Naive thymus-derived CD4-positive, alpha-beta T cell (primary cell): ENCODE measurements at regions of chr15 and their contacts with region 1.

Region 1: GRCh38 chr15:99424978-99425656 is 140.7 kb upstream of the MEF2A start:
- DNase-seq: peak in 7 of 9 donors; percentile 33 to 63 (median 39)
- ATAC-seq: peak; percentile 79
- H3K4me3 ChIP-seq: peak overlapping the region; percentile 0
- H3K4me3 Mint-ChIP-seq: peak overlapping the region; percentile 65 to 91 (median 82)
- H3K27ac ChIP-seq: peak overlapping the region; percentile 72
- H3K27ac Mint-ChIP-seq: peak overlapping the region; percentile 89 to 98 (median 97)
- H3K4me1 ChIP-seq: peaks cover 0 to 60% of the 10 kb centered on the region in 2 donors
- H3K4me1 Mint-ChIP-seq: peaks cover 22 to 82% (median 75%) of the 10 kb centered on the region in 7 donors
- H3K27me3 ChIP-seq: no peaks in the 10 kb centered on the region
- H3K27me3 Mint-ChIP-seq: no peaks in the 10 kb centered on the region

Region 2: DNA sequence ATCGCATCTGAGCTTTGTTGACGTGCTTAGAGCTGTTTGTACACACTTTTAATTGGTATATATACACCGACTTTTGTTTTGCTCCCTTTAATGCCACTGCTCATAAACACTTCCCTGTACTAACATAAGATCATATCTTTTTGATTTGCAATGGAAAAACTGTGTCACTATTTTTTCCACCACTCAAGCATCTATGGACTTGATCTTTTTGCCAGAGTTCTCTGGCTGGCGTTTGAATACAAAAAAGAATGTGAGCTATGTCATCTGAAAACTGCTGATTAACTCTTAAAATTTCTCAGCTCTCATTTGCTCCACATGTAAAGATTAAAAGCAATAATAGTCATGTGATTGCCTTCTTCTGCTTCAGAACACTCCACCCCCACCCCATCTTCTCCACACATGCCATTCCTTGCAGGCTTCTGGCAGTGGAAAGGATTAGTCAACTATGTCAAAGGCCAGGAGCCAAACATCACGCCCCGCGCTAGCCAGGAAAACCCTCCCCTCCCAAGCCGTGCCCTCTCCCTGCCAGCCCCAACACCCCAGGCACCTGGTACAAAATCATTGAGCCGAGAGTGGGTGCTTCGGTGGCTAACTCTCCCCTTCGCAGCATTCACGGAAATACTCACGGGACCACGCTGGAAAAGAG is 17.3 kb after region 1 on chr15:
- CTCF ChIA-PET with region 1: interaction called, 7 read pairs
- POLR2A ChIA-PET with region 1: interaction called, 71 read pairs
- intact Hi-C with region 1: loop called in 1 of 2 experiments (anchors 1 kb)
- DNase-seq: peak in 3 of 9 donors; percentile 22 to 44 (median 23)
- ATAC-seq: no peak
- H3K4me3 ChIP-seq: no peak overlapping the region
- H3K4me3 Mint-ChIP-seq: peak overlapping the region in 6 of 10 donors; percentile 8 to 30 (median 20)
- H3K27ac ChIP-seq: no peak overlapping the region
- H3K27ac Mint-ChIP-seq: peak overlapping the region; percentile 30 to 100 (median 90)
- H3K4me1 ChIP-seq: peaks cover 0 to 57% of the 10 kb centered on the region in 2 donors
- H3K4me1 Mint-ChIP-seq: peaks cover 10 to 87% (median 65%) of the 10 kb centered on the region in 7 donors
- H3K27me3 ChIP-seq: no peaks in the 10 kb centered on the region
- H3K27me3 Mint-ChIP-seq: peaks cover 0 to 8% (median 0%) of the 10 kb centered on the region in 5 donors

Region 3: DNA sequence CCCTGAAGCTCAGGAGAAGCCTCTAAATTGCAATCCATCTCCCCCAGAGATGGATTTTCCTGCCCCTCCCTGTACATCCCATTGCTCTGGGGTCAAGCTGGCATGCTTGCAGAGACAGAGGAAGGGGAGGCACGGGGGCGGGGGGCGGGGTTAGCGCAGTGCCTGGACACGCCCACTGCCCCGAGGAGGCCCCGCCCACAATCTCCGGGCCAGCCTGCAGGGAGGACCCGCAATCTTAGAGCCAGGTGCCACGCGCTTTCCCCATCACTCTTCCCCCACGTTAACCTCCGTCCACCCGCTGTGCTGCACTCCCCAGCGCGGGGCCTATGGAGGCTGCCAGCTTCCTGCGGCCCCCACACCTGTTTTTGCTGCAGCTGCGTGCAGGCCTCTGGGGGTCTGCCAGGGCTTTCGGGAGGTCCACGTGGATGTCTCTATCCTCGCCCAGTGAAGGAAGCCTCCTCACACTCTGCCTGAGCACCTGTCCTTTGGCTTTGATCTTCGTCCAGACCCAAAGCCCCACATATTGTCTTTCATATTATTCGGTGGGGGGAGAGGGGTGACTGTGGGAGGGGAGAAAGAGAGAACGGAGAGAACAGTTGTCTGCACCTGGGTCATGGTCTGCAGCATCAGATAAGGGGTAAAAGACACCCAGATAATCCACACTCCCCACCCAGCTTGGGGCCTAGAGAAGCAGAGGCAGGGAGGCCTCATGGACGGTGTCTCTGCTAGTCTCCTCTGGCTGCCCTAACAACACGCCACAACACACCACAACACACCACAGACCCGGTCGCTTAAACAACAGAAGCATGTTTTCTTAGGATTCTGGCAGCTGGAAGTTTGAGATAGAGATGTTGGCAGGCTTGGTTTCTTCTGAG is 22.6 kb after region 1 on chr15:
- CTCF ChIA-PET with region 1: interaction called, 5 read pairs
- POLR2A ChIA-PET with region 1: interaction called, 71 read pairs
- intact Hi-C with region 1: loop called in 1 of 2 experiments (anchors 1 kb)
- DNase-seq: peak in 1 of 9 donors; percentile 21
- ATAC-seq: no peak
- H3K4me3 ChIP-seq: no peak overlapping the region
- H3K4me3 Mint-ChIP-seq: peak overlapping the region in 8 of 10 donors; percentile 15 to 53 (median 50)
- H3K27ac ChIP-seq: no peak overlapping the region
- H3K27ac Mint-ChIP-seq: peak overlapping the region in 8 of 9 donors; percentile 19 to 91 (median 56)
- H3K4me1 ChIP-seq: peaks cover 0 to 53% of the 10 kb centered on the region in 2 donors
- H3K4me1 Mint-ChIP-seq: peaks cover 33 to 89% (median 68%) of the 10 kb centered on the region in 7 donors
- H3K27me3 ChIP-seq: no peaks in the 10 kb centered on the region
- H3K27me3 Mint-ChIP-seq: peaks cover 0 to 14% (median 0%) of the 10 kb centered on the region in 5 donors